ENCODE measurements at regions of chr14 and their contacts with region 1.

Region 1: DNA sequence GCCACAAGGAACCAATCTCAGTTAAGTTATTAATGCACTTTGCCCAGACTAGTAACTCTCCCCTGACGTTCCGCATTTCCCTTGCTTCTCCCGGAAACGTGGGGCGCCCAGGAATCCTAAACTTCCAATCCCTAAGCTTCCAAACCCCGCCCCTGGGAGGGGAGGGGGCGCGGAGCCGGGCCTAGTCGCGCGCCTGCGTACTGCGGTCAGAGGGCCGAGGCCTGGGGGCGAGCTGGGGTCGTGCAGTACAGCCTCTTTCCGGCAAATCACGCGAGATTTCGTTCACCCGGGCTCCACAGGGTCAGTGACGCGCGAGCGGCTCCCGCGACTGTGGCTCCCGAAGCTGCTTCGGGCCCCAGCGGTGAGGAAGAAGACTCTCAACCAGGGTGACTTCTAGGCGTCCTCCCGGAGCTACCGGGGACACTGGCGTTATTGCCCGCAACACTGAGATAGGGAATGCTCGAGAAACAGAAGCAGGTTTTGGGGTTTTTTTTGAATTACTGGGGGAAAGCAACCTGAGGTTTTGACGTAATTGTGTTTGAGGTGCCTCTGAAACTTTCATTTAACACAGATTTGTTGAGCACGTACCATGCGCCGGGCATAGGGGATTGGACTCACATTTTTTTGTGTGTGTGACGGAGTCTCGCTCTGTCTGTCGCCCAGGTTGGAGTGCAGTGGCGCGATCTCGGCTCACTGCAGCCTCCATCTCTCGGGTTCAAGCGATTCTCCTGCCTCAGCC is at the start of gene PTGR2:
- DNase-seq: peak; percentile 88
- H3K4me3 Mint-ChIP-seq: peak within 1 kb of the TSS; percentile 98
- H3K27ac Mint-ChIP-seq: peak within 1 kb of the TSS; percentile 95
- H3K4me1 Mint-ChIP-seq: peaks cover 22% of the 10 kb centered on the region
- H3K27me3 Mint-ChIP-seq: peaks cover 5% of the 10 kb centered on the region
- total RNA-seq, gene PTGR2: 2.3 to 2.8 TPM

Region 2: DNA sequence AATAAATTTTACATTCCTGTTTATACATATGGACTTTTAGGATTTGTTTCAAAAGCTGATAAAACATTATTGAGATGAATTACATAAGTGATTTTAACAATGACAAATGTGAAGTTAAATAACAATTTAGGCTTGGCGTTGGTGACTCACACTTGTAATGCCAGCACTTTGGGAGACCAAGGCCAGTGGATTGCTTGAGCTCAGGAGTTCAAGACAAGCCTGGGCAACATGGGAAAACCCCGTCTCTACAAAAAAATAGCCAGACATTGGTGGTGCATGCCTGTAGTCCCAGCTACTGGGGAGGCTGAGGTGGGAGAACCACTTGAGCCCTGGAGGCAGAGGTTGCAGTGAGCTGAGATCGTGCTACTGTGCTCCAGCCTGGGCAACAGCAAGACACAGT is 275.4 kb before region 1 on chr14:
- CTCF ChIA-PET with region 1: no interaction called
- POLR2A ChIA-PET with region 1: no interaction called
- DNase-seq: no peak
- H3K4me3 Mint-ChIP-seq: no peak overlapping the region
- H3K27ac Mint-ChIP-seq: no peak overlapping the region
- H3K4me1 Mint-ChIP-seq: no peaks in the 10 kb centered on the region
- H3K27me3 Mint-ChIP-seq: no peaks in the 10 kb centered on the region

Region 3: GRCh38 chr14:73886449-73887317 is 34.9 kb after region 1 on chr14 and contains the start of gene ZNF410:
- CTCF ChIA-PET with region 1: interaction called, 3 read pairs
- POLR2A ChIA-PET with region 1: interaction called, 27 read pairs
- DNase-seq: peak; percentile 88
- H3K4me3 Mint-ChIP-seq: peak within 1 kb of the TSS; percentile 96
- H3K27ac Mint-ChIP-seq: peak within 1 kb of the TSS; percentile 94
- H3K4me1 Mint-ChIP-seq: peaks cover 51% of the 10 kb centered on the region
- H3K27me3 Mint-ChIP-seq: no peaks in the 10 kb centered on the region
- total RNA-seq, gene ZNF410: 54.2 to 56.5 TPM

Measured in activated CD4-positive, alpha-beta memory T cell treated with anti-CD3 and anti-CD28 coated beads, Interleukin-2, amount 10 ng/mL, durations not matched to agents 7 days and 5 days (primary cell).